ENCODE measurements at regions of chr19 and their contacts with region 1.

Region 1: GRCh38 chr19:43446746-43447489 is 18.5 kb downstream of the LYPD3 start:
- DNase-seq: peak; percentile 83
- ATAC-seq: peak; percentile 88

Region 2: DNA sequence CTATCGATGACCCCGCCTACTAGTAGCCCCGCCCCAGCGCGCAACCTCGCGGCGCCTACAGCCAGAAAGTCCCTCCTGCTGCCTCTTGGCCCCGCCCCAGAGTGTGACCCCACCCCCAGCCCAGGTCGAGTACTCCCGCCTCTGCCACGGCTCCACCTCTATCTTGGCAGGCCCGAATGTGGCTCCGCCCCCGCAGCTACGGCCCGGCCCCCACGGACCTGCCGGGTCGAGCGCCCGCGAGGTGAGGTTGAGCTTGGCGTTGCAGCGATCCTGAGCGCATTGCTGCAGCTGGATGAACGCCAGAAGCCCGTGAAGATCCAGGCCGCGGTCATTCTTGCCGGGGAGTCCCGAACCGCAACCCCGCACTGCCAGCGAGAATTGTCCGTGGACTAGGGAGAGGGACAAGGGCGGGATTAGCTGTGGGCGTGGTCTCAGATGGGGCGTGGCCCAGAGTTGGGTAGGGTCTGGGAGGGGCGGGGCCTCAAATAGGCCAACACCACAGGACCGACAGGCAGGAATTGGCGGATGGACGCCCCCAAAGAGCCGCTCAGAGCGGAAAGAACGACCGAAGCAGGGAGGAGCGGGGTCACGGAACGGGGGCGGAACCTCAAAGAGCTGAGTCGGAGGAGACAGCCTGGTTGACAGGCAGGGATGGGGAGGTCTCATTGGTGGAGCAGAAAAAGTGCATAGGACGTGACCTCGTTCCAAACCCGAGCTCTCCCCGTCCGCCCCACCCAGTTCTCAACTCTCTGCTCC is 16.6 kb after region 1 on chr19:
- intact Hi-C with region 1: no loop called
- DNase-seq: peak; percentile 98
- ATAC-seq: peak; percentile 96

Region 3: GRCh38 chr19:43519436-43520088 is 72.6 kb after region 1 on chr19:
- intact Hi-C with region 1: loop called (anchors 2 kb)
- DNase-seq: peak; percentile 81
- ATAC-seq: peak; percentile 75

Measured in left ventricle myocardium superior (tissue), 1 donor.